ENCODE measurements at regions of chr7 and their contacts with region 1.

Region 1: GRCh38 chr7:100632951-100633717 is 8.2 kb downstream of the TFR2 start:
- DNase-seq: peak; percentile 57
- H3K4me3 Mint-ChIP-seq: peak overlapping the region; percentile 92
- H3K27ac Mint-ChIP-seq: peak overlapping the region; percentile 92
- H3K4me1 Mint-ChIP-seq: peaks cover 21% of the 10 kb centered on the region
- H3K27me3 Mint-ChIP-seq: no peaks in the 10 kb centered on the region

Region 2: DNA sequence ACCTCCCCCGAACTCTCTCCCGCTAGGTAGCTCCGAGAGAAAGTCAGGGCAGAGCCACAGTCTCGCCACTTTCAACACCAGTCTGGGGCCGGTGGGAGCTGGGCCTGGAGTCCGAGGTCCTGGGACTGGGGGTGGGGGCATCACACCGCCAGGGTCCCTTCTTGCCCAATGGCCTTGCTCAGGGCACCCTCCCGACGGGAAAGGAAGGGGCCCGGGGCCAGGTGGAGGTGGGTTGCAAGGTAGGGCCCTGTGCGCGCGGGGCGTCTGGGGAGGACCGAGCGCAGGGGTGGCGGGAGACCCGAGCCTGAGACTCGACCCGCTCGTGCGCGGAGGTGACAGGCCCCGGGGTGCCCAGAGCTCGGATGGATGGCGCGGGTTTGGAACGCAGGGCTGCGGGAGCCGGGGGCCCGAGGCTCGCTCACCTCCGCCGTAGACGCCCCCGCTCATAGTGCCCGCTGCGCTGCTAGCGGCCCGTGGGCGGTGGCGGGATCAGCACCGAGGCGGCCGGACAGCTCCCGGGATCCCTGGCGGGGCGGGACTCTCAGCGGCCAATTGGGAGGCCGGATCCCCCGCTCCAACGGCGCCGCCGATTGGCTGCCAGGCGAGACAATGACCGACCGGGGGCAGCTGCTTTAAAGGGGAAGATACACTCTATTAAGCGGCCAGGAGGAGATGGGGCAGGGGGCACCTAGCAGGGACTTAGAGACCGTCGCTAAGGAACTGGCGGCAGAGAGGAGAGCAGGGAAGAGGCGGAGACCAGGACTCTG is 23.0 kb after region 1 on chr7 and contains the start of gene ACTL6B:
- intact Hi-C with region 1: loop called (anchors 2 kb)
- DNase-seq: peak; percentile 67
- H3K4me3 Mint-ChIP-seq: no peak within 1 kb of the TSS
- H3K27ac Mint-ChIP-seq: no peak within 1 kb of the TSS
- H3K4me1 Mint-ChIP-seq: no peaks in the 10 kb centered on the region
- H3K27me3 Mint-ChIP-seq: peaks cover 33% of the 10 kb centered on the region
- total RNA-seq, gene ACTL6B: not detected in 2 replicates

Measured in activated T-helper 1 cell treated with anti-CD3 and anti-CD28 coated beads, Interleukin-12 subunit alpha, Interleukin-12 subunit beta, Interleukin-2, Interleukin-4 antibody, amounts not matched to agents 30 ng/mL and 10 ng/mL and 1 ng/mL, durations not matched to agents 14 hours and 24 hours and 36 hours (primary cell).